Adrenal gland (tissue), 19 donors: ENCODE measurements at regions of chr1 and their contacts with region 1.

Region 1: DNA sequence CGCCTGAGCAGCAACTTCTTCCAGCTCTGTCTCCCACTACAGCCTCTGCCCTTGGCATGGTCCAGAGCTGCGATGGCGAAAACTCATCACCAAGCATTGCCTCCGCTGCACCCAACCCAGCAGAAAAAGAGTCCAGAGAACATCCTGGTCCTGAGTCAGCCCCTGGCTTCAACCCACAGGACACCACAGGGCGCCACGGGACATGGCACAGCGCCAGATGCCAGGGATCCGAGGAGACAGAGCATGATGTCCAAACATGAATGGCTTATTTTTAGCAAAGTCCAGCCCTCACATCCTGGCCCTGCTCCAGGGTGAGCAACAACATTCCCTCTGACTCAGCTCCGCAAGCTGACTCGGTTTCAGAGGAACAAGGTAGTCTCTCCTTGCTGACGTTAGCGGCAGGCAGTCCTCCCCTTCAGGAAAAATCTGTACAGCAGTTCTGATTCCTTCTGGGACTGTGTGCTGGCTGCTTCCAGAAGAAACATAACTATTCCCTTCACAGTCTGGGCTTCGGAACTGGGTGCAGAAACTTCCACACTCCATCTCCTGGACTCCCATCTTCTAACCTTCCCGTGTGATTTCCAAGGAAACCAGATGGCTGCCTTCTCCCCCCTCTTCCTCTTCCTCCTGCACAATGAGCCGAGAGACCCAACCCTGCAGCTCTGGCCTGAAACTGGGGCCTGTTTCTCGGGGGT is 131.3 kb downstream of the TOMM20 start:
- DNase-seq: peak; percentile 99 to 100 (median 100)
- H3K4me3 ChIP-seq: no peak overlapping the region
- H3K27ac ChIP-seq: peak overlapping the region; percentile 86 to 90 (median 87)
- H3K4me1 ChIP-seq: peaks cover 13 to 25% of the 10 kb centered on the region in 2 donors
- H3K27me3 ChIP-seq: no peaks in the 10 kb centered on the region
- CTCF ChIP-seq: peak in 2 of 6 experiments; percentile 4 to 13
- POLR2A ChIP-seq: peak; percentile 45 to 91

Region 2: GRCh38 chr1:234515821-234516241 is 481.5 kb before region 1 on chr1:
- intact Hi-C with region 1: loop called in 1 of 2 experiments (anchors 10 kb)
- DNase-seq: no peak
- H3K4me3 ChIP-seq: no peak overlapping the region
- H3K27ac ChIP-seq: peak overlapping the region in 1 of 5 donors; percentile 6
- H3K4me1 ChIP-seq: peaks cover 0 to 9% of the 10 kb centered on the region in 2 donors
- H3K27me3 ChIP-seq: no peaks in the 10 kb centered on the region
- CTCF ChIP-seq: no peak
- POLR2A ChIP-seq: no peak

Region 3: DNA sequence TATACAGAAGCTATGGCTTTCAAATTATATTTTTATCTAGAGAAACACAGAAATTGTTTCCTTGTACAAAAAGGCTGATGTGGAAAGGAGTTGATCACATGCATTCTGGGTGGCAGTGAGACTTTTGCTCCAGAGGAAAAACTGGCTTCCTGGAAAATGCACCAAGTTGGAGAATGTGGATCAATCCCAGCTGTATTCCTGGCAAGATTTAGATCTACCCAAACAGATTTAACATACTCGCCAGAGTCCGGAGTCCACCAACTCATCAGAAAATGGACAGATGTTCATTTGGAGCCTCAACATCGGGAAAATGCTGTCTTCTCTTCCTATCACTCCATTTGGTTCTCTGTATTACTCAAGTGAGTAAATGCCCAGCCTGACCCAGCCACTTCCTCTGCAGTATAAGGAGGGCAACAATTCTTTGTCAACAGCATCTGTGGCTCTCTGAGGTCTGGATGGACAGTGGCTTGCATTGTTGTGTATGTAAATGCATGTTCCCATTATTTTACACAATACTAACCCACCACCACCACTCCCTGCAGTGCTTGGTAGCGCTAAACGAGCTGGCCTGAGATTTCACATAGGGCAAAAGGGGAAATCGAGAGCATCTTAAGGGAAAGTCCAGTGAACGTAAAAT is 161.2 kb before region 1 on chr1:
- intact Hi-C with region 1: no loop called
- DNase-seq: no peak
- H3K4me3 ChIP-seq: no peak overlapping the region
- H3K27ac ChIP-seq: no peak overlapping the region
- H3K4me1 ChIP-seq: peaks cover 0 to 3% of the 10 kb centered on the region in 2 donors
- H3K27me3 ChIP-seq: no peaks in the 10 kb centered on the region
- CTCF ChIP-seq: no peak
- POLR2A ChIP-seq: no peak